ENCODE measurements at regions of chr2 and their contacts with region 1.

Region 1: DNA sequence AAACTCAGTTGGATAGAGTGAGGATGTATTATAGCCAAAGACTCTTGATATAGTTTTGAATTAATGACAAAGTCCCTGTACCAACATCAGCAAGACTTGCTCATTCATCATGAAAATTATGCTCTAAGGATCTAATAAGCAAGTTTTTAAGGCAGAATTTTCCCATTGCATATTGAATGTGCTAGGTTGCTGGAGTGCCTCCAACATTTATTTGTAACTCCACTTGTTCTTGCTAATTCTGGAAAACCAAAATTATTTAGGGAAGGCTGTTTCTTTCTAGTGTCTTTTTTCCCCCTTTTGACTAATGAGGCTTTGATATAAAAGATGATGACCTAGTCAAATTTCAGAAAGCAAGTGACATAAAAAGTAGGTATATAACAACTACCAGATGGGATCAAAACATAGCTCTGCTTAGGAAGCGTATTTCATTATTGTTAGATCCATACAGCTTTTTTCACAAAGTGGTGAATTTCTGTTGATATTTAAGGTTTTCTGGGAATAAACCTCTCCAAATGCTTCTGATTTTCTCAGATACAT is 7.7 kb downstream of the SLC4A10 start:
- DNase-seq: no peak
- ATAC-seq: no peak
- H3K4me3 ChIP-seq: no peak overlapping the region
- H3K4me1 ChIP-seq: peaks cover 6% of the 10 kb centered on the region
- CTCF ChIP-seq: no peak

Region 2: DNA sequence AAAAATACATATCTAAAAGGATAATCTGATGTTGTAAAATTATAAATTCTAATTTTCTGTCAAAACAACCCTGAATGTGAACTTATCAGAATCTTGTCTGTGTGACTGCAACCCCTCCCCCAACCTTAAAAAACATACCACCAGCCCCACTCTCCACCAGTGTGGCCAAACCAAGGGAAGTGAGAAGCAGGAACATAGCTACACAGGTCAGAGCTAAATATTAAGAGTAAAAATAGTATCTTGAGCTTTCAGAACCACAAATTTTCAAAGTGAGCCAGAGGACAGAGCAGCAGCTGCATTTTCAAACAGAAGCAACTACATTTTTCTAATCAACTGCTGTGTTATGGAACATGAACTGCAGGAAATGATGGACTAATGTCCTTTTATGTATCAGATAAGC is 149.0 kb after region 1 on chr2:
- intact Hi-C with region 1: loop called in 1 of 2 experiments (anchors 10 kb)
- DNase-seq: no peak
- ATAC-seq: no peak
- H3K4me3 ChIP-seq: no peak overlapping the region
- H3K4me1 ChIP-seq: peaks cover under 1% of the 10 kb centered on the region
- CTCF ChIP-seq: no peak